ENCODE measurements at regions of chr5 and their contacts with region 1.

Region 1: DNA sequence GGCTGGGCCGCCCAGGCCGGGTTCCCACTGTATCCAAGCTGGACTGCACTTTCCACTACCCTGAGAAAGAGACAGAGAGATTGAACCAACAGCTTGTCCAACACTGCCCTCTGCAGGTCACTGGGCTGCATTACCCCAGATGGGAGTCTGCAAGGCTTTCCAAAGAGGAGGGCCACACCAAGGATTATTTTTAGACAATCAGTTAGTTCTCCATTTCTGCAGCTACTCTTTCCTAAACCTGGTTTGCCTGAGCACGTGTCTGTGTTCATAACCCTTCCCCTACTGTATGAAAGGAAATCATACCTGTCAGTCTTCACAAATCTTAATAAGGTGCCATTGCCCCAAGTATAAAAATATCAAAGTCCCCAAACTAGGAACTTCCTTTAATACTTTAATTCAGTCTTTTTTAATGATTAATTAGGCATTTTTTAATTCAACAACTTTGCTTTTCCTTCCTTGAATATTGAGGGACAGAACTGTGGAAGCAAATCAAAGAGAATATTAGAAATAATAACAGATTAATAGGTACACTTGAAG is 13.4 kb upstream of the FGF1 start:
- DNase-seq: peak; percentile 80 to 90 (median 86)
- ATAC-seq: peak; percentile 99
- H3K4me3 ChIP-seq: no peak overlapping the region
- H3K27ac ChIP-seq: no peak overlapping the region
- H3K4me1 ChIP-seq: peaks cover 14 to 18% of the 10 kb centered on the region in 2 donors
- H3K27me3 ChIP-seq: no peaks in the 10 kb centered on the region
- CTCF ChIP-seq: peak; percentile 95 to 96

Region 2: GRCh38 chr5:142611154-142611553 is 88.1 kb before region 1 on chr5:
- intact Hi-C with region 1: loop called in 1 of 2 experiments (anchors 5 kb)
- DNase-seq: peak in 3 of 4 donors; percentile 29 to 65 (median 56)
- ATAC-seq: peak; percentile 89
- H3K4me3 ChIP-seq: no peak overlapping the region
- H3K27ac ChIP-seq: no peak overlapping the region
- H3K4me1 ChIP-seq: no peaks in the 10 kb centered on the region
- H3K27me3 ChIP-seq: no peaks in the 10 kb centered on the region
- CTCF ChIP-seq: peak; percentile 81 to 93

Region 3: GRCh38 chr5:142655339-142656267 is 43.6 kb before region 1 on chr5:
- intact Hi-C with region 1: loop called in 1 of 2 experiments (anchors 5 kb)
- DNase-seq: peak; percentile 78 to 93 (median 86)
- ATAC-seq: peak; percentile 99
- H3K4me3 ChIP-seq: no peak overlapping the region
- H3K27ac ChIP-seq: no peak overlapping the region
- H3K4me1 ChIP-seq: peaks cover 0 to 4% of the 10 kb centered on the region in 2 donors
- H3K27me3 ChIP-seq: peaks cover 0 to 5% of the 10 kb centered on the region in 2 donors
- CTCF ChIP-seq: peak; percentile 97 to 98

Measured in left lung (tissue), 14 donors.